ENCODE measurements at regions of chr3 and their contacts with region 1.

Region 1: GRCh38 chr3:50611464-50612233 is at the start of gene CISH:
- DNase-seq: peak; percentile 98
- ATAC-seq: peak; percentile 75
- total RNA-seq, gene CISH: 14.4 to 19.9 TPM

Region 2: DNA sequence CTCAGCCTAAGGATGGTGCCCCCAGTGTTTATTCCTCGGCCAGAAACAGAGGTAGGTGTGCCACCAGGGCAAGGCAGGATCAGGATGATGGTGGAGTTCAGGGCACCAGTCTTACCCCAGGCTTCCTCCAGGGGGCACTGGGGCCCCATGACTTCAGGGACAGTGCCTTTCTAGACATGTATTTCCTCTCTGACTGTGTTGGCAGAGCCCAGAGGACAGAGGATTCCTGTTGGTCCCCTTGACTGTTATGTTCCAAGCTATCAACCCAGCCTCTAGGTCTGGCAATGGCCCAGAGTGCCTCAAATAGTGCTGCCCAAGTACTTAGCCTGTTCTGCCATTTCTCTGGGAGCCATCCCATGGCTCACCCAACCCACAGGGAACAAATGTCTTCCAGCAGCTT is 39.5 kb before region 1 on chr3:
- intact Hi-C with region 1: loop called (anchors 2 to 5 kb)
- DNase-seq: peak; percentile 66 to 79
- ATAC-seq: peak; percentile 40

Region 3: DNA sequence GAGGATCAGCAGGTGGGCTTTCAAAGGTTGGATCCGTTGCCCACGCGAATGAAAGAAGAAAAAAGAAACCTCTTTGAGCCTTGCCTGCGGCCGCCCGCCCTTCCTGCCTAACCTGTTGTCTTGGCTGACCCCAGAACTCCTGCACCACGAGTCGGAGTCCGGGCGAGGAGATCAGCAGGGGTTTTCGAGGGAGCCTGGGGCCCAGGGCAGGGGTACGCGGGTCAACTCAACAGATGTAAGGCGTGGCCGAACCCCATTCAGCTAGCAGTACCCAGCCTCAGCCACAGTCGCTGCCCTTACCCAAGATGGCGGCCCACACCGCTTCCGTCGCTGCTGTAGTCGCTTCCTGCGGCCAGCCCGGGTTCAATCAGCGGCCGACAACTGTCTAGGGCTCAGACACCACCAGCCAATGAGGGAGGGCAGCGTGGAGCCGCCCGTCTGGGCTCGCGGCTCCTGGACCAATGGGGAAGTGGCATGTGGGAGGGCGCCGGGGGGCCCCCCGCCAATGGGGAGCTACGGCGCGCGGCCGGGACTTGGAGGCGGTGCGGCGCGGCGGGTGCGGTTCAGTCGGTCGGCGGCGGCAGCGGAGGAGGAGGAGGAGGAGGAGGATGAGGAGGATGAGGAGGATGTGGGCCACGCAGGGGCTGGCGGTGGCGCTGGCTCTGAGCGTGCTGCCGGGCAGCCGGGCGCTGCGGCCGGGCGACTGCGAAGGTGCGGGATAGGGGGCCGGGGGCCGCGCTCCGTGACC is 773.3 kb after region 1 on chr3 and contains the start of gene MANF:
- intact Hi-C with region 1: loop called in 1 of 2 experiments (anchors 5 kb)
- DNase-seq: peak; percentile 97 to 99
- ATAC-seq: peak; percentile 87
- total RNA-seq, gene MANF: 62.7 to 83.4 TPM

Measured in left colon (tissue), 2 donors.